MCF 10A (cell line): ENCODE measurements at regions of chr3 and their contacts with region 1.

Region 1: GRCh38 chr3:107242579-107242978 is 134.7 kb upstream of the CCDC54 start:
- DNase-seq: no peak
- H3K4me3 Mint-ChIP-seq: peak overlapping the region; percentile 99
- H3K27ac Mint-ChIP-seq: peak overlapping the region; percentile 94
- H3K4me1 Mint-ChIP-seq: peaks cover 39% of the 10 kb centered on the region
- H3K27me3 Mint-ChIP-seq: no peaks in the 10 kb centered on the region
- CTCF ChIP-seq: no peak

Region 2: DNA sequence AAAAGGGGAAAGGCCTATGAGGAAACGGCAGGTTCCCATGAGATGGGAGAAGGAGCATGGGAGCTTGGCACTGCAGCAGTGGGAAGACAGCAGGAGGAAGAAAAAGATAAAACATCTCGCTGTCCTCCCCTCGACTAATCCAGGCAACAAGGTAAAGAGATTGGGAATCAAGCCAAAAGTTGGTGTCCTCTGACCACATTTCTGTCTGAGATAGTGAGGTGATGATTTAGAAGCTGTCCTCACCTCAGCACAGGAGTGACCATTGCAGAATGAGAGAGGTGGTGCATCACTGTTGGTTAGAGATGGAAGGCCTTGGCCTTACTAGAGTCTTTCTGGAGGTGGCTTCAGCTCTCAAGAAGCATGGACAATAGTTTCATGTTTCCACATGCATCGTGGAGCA is 91.9 kb before region 1 on chr3:
- CTCF ChIA-PET with region 1: no interaction called
- POLR2A ChIA-PET with region 1: no interaction called
- intact Hi-C with region 1: no loop called
- DNase-seq: no peak
- H3K4me3 Mint-ChIP-seq: no peak overlapping the region
- H3K27ac Mint-ChIP-seq: no peak overlapping the region
- H3K4me1 Mint-ChIP-seq: no peaks in the 10 kb centered on the region
- H3K27me3 Mint-ChIP-seq: no peaks in the 10 kb centered on the region
- CTCF ChIP-seq: no peak

Region 3: DNA sequence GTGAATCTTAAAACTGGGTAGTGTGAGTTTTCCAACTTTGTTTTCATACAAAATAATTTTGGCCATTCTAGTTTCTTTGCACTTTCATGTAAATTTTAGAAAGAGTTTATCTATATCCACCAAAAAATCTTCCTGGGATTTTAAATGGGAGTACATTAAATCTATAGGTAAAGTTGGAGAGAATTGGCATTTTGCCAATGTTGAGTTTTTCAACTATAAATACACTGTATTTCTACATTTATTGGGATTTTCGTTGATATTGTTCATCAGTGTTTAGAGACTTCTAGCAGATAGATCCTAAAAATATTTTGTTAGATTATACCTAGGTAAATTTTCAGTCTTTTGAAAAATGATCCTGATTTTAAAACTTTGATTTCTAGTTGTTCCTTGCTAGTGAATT is 51.5 kb after region 1 on chr3:
- CTCF ChIA-PET with region 1: no interaction called
- POLR2A ChIA-PET with region 1: no interaction called
- intact Hi-C with region 1: no loop called
- DNase-seq: no peak
- H3K4me3 Mint-ChIP-seq: no peak overlapping the region
- H3K27ac Mint-ChIP-seq: no peak overlapping the region
- H3K4me1 Mint-ChIP-seq: no peaks in the 10 kb centered on the region
- H3K27me3 Mint-ChIP-seq: no peaks in the 10 kb centered on the region
- CTCF ChIP-seq: no peak

Region 4: DNA sequence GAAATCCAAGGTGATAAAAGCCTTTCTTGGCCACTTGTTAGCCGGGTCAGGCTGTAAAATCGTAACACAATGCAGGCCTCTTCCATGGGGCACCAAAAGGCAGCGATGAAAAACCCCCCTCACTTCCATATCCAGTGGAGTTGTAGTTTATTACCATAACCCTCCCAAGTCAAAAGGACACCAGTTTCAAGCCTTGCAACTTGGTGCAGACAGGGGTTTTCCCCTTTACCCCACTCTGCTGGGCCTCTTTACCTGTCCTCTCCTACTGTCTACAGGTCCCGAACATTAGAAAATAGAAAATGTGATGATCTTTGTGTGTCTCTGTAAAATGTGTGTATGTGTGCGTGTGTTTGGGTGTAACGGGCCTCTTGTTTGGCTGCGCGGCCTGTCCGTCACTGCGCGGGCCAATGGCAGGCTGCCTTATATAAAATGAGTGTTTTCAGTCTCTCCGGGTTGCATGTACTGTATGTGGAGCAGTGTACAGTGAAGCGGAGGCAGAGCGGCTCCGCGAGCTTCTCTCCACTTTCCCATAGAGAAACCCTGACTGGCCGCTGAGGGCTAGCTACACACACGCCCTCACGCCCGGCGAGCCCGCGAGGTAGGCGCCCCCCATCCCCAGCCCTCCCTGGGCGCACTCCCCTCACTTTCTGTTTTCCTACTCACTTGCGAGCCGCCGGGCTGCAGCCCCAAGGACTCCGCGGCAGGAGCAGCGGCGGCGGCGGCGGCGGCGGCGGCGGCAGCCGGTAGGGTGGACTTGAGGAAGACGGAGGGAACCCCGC is 280.1 kb after region 1 on chr3 and contains the start of gene BBX:
- CTCF ChIA-PET with region 1: interaction called, 3 read pairs
- POLR2A ChIA-PET with region 1: interaction called, 22 read pairs
- intact Hi-C with region 1: loop called (anchors 1 kb)
- DNase-seq: peak; percentile 93
- H3K4me3 Mint-ChIP-seq: peak within 1 kb of the TSS; percentile 85
- H3K27ac Mint-ChIP-seq: peak within 1 kb of the TSS; percentile 93
- H3K4me1 Mint-ChIP-seq: peaks cover 14% of the 10 kb centered on the region
- H3K27me3 Mint-ChIP-seq: no peaks in the 10 kb centered on the region
- CTCF ChIP-seq: no peak
- total RNA-seq, gene BBX: 73.2 and 77.2 TPM in 2 replicates